MCF 10A (cell line): ENCODE measurements at regions of chr5 and their contacts with region 1.

Region 1: DNA sequence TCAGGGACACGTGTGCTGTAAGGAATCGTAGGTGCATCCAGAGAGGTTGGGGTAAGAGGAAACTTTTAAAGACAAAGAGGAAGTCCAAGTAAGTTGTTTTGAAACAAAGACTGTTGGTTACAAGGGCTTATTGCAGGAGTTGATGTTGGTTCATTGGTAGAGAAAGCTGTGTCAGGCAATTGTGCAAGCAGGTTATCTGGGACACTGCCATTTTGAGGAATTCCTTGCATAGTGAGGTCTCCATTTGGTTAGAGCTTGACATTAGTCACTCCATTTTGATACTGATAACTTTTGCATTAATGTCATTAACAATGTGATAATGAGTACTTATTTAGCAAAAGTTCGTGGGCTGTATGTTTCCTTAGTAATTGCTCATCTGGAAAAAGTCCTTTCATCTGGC is 24.9 kb downstream of the CNOT6 start:
- DNase-seq: no peak
- H3K4me3 Mint-ChIP-seq: no peak overlapping the region
- H3K27ac Mint-ChIP-seq: peak overlapping the region; percentile 37
- H3K4me1 Mint-ChIP-seq: peaks cover 55% of the 10 kb centered on the region
- H3K27me3 Mint-ChIP-seq: no peaks in the 10 kb centered on the region
- CTCF ChIP-seq: no peak

Region 2: GRCh38 chr5:180411948-180412347 is 107.2 kb before region 1 on chr5:
- CTCF ChIA-PET with region 1: no interaction called
- POLR2A ChIA-PET with region 1: no interaction called
- intact Hi-C with region 1: no loop called
- DNase-seq: no peak
- H3K4me3 Mint-ChIP-seq: no peak overlapping the region
- H3K27ac Mint-ChIP-seq: no peak overlapping the region
- H3K4me1 Mint-ChIP-seq: no peaks in the 10 kb centered on the region
- H3K27me3 Mint-ChIP-seq: no peaks in the 10 kb centered on the region
- CTCF ChIP-seq: no peak

Region 3: GRCh38 chr5:180494060-180494509 is 25.0 kb before region 1 on chr5 and contains the start of gene CNOT6:
- CTCF ChIA-PET with region 1: no interaction called
- POLR2A ChIA-PET with region 1: interaction called, 18 read pairs
- intact Hi-C with region 1: no loop called
- DNase-seq: peak; percentile 96
- H3K4me3 Mint-ChIP-seq: peak within 1 kb of the TSS; percentile 80
- H3K27ac Mint-ChIP-seq: peak within 1 kb of the TSS; percentile 95
- H3K4me1 Mint-ChIP-seq: peaks cover 30% of the 10 kb centered on the region
- H3K27me3 Mint-ChIP-seq: no peaks in the 10 kb centered on the region
- CTCF ChIP-seq: no peak
- total RNA-seq, gene CNOT6: 67.0 and 73.1 TPM in 2 replicates